Mucosa of descending colon (tissue), 3 donors: ENCODE measurements at regions of chr11 and their contacts with region 1.

Region 1: DNA sequence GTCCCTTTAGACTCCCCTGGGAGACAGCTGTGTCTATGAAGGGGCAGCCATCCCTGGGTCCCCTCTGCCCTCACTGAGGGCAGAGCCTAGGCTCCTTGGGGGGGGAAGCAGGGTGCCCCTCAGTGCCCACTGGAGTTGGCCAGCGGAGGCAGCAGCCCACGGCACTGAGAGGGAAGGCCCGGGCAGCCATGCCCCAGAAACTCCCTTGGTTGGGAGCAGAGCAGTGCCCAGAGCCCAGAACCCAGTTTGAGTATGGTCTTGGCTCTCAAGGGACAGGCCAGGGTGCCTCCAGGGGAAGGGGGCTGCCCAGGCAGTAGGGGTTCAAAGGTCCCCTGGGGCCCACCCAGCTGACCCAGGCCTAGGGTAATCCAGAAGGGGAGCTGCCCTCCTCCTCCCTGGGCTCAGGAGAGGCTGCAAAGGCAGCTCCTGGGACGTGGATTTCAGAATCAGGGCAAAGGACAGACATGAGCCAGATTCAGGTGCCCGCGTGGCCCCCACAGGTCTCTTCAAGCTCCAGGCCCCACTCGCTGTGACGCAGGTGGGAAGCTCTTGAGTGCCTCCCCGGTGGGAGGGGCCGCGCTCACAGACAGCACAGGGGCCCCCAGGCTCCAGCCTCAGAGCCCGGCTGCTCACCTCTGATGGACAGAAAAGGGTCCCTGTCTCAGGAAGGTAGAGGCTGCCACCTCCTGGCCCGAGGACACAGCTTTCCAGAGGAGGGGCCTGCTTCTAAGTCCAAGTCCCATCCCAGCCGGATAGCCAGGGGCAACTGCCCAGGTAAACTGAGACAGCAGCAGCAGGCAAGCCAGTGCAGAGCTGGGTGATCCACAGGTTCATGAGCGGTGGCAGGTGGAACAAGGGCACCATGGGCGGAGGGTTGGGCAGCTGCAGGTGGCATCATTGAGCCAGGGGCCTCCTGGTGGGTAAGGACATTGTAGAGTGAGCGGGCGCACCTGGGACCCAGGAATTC is 2.6 kb downstream of the C11orf21 start:
- DNase-seq: peak; percentile 22 to 52 (median 51)
- ATAC-seq: peak; percentile 26
- H3K4me3 ChIP-seq: no peak overlapping the region
- H3K4me1 ChIP-seq: no peaks in the 10 kb centered on the region
- CTCF ChIP-seq: no peak

Region 2: GRCh38 chr11:2196970-2197770 is 101.9 kb before region 1 on chr11:
- intact Hi-C with region 1: loop called (anchors 10 kb)
- DNase-seq: peak; percentile 84 to 86 (median 85)
- ATAC-seq: peak; percentile 80
- H3K4me3 ChIP-seq: no peak overlapping the region
- H3K4me1 ChIP-seq: peaks cover 9% of the 10 kb centered on the region
- CTCF ChIP-seq: peak; percentile 88

Region 3: DNA sequence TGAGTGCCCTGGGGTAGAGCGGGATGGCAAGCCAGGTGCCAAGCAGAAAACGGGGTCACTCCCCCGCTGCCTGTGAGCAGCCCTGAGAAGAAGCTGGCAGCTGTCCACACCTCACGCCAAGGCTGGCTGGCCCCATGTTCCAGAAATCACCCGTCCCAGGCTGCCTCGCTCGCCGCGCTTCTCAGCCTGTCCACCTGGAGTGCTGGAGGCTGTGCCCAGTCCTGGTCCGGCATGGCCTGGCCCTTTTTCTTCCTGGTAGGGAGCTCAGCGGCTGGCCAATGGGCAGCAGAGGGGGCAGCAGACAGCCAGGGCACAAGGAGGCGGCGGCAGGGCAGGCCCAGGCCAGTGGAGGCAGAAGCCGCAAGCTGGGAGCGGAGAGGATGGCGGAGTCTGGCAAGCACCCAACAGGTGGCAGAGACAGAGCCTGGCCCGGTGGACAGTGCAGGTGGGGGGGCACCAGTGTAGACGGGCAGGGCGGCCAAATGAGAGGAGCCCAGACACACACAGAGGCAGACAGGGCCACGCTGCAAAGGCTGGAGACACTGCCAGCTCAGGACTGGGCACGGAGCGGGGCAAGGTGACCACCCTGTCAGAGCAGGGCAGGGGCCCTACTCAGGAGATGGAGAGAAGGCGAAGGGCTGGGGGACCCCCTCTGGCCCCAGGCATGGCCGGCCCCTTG is 90.2 kb before region 1 on chr11:
- intact Hi-C with region 1: loop called in 1 of 2 experiments (anchors 10 kb)
- DNase-seq: peak in 2 of 3 donors; percentile 39 to 61
- ATAC-seq: peak; percentile 25
- H3K4me3 ChIP-seq: no peak overlapping the region
- H3K4me1 ChIP-seq: peaks cover 13% of the 10 kb centered on the region
- CTCF ChIP-seq: no peak